CD8-positive, alpha-beta T cell (primary cell): ENCODE measurements at regions of chr9 and their contacts with region 1.

Region 1: GRCh38 chr9:10605388-10605787 is 7.4 kb downstream of the PTPRD start:
- DNase-seq: no peak
- ATAC-seq: no peak
- H3K4me3 ChIP-seq: no peak overlapping the region
- H3K4me3 Mint-ChIP-seq: no peak overlapping the region
- H3K27ac ChIP-seq: no peak overlapping the region
- H3K27ac Mint-ChIP-seq: no peak overlapping the region
- H3K4me1 ChIP-seq: no peaks in the 10 kb centered on the region
- H3K4me1 Mint-ChIP-seq: no peaks in the 10 kb centered on the region
- H3K27me3 ChIP-seq: no peaks in the 10 kb centered on the region
- H3K27me3 Mint-ChIP-seq: no peaks in the 10 kb centered on the region
- CTCF ChIP-seq: no peak

Region 2: DNA sequence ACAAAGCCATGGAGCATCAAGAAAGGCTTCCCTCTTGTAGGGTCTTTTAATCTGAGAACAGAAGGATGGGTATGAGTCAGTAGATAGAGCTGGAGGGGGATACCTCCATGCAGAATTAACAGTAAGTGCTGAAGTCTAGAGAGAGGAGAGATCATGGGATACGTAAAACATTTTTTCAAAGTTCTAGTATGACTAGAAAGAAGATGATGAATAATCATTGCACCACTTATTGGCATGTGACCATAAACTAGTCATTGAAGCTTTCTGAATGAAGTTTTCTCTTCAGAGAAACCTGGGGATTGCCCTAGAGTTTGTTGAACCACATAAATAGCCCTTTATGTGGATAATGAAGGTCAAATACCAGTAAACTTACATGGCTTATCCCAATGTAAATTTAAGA is 56.0 kb after region 1 on chr9:
- CTCF ChIA-PET with region 1: no interaction called
- POLR2A ChIA-PET with region 1: no interaction called
- intact Hi-C with region 1: loop called in 1 of 2 experiments (anchors 10 kb)
- DNase-seq: no peak
- ATAC-seq: no peak
- H3K4me3 ChIP-seq: no peak overlapping the region
- H3K4me3 Mint-ChIP-seq: no peak overlapping the region
- H3K27ac ChIP-seq: no peak overlapping the region
- H3K27ac Mint-ChIP-seq: no peak overlapping the region
- H3K4me1 ChIP-seq: no peaks in the 10 kb centered on the region
- H3K4me1 Mint-ChIP-seq: no peaks in the 10 kb centered on the region
- H3K27me3 ChIP-seq: no peaks in the 10 kb centered on the region
- H3K27me3 Mint-ChIP-seq: no peaks in the 10 kb centered on the region
- CTCF ChIP-seq: no peak